GM12878 (cell line): ENCODE measurements at regions of chr22 and their contacts with region 1.

Region 1: GRCh38 chr22:30289134-30289979 is at the start of gene CASTOR1:
- DNase-seq: no peak
- ATAC-seq: peak; percentile 83
- H3K4me3 ChIP-seq: peak within 1 kb of the TSS; percentile 74
- H3K27ac ChIP-seq: peak within 1 kb of the TSS; percentile 55
- H3K4me1 ChIP-seq: peaks cover 25% of the 10 kb centered on the region
- H3K27me3 ChIP-seq: no peaks in the 10 kb centered on the region
- CTCF ChIP-seq: no peak
- EP300 ChIP-seq: no peak
- POLR2A ChIP-seq: no peak; the same call in none of the 2 replicates
- RAD21 ChIP-seq: no peak
- polyA plus RNA-seq, gene CASTOR1: 0.31 to 1.2 TPM

Region 2: DNA sequence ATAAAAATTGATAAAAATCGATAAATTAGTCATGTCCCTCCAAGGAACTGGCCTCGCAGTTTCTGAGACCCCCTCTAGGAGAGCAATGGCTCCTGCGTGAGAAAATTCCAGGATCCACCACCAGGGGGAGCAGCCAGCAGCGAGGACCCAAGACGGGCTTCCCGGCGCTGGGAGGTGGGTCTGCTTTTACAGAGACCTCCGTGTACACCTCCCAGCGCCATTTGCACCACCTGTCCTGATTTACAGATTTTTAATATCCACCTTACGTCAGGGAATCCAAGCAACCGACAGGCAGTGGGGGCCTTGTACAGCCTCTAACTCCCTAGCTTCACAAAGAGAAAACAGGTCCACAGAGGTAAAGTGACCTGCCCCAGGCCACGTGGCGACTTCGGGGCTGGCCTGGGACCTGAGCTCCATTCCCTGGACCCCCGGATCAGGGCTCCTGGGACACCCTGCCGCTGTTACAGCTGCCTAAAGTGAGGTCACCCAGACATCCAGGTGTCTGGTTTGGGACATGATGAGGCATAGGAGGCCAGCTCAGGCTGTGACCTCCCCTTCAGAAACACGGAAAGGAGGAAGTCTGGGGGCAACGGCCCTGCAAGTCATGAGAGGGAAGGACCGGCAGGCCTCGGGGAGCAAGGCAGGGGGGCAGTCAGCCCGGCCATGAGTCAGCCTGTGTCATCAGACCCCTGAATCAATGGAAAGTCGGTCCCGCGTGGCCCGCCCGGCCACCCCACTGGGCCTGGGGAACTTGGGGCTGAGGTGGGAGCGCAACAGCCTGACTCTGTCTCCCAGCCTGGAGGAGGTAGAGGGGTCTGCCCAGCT is 26.2 kb before region 1 on chr22:
- CTCF ChIA-PET with region 1: interaction called, 69 read pairs
- POLR2A ChIA-PET with region 1: interaction called, 3 read pairs
- RAD21 ChIA-PET with region 1: interaction called, 31 read pairs
- SMC1A ChIA-PET with region 1: interaction called, 15 read pairs
- in situ Hi-C with region 1: no loop called
- intact Hi-C with region 1: loop called (anchors 1 kb)
- DNase-seq: no peak
- ATAC-seq: peak; percentile 38
- H3K4me3 ChIP-seq: 0 out of 2 replicates have a peak overlapping the region, but pooled peaks have one; percentile 12
- H3K27ac ChIP-seq: no peak overlapping the region
- H3K4me1 ChIP-seq: peaks cover 20% of the 10 kb centered on the region
- H3K27me3 ChIP-seq: no peaks in the 10 kb centered on the region
- CTCF ChIP-seq: peak; percentile 84 to 97 (median 92)
- EP300 ChIP-seq: no peak
- POLR2A ChIP-seq: no peak
- RAD21 ChIP-seq: peak; percentile 54

Region 3: DNA sequence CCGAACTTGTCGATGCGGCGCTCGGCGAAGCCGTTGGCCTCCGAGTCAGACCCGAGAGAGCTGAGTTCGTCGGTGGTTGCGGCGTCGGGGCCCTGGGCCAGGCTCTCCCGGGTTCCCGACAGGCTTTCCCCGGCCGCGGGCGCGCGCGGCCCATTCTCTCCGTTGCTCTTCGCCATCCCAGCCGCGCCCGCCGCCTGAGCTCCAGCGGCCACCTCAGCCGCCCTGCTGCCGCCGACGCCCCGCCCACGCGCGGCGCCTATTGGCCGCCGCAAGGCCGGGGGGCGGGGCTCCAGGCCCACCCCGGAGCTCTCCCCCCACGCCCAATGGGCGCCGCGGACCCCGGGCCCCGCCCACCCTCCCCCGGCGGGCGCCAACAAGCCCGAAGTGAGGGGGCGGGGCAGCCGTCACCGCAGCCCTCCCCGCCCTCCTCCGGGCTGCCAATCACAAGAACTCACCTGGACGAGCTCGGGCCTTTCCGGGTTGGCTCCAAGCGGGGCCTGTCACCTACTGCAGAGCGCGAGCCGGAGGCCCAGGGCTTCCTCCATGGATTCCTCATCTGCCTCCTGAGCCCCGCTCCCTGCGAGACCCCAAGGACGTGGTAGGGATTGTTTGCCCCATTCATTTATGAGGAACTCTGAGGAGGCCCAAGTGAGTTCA is 37.5 kb after region 1 on chr22 and contains the start of gene TBC1D10A:
- CTCF ChIA-PET with region 1: interaction called, 125 read pairs
- POLR2A ChIA-PET with region 1: interaction called, 28 read pairs
- RAD21 ChIA-PET with region 1: interaction called, 118 read pairs
- SMC1A ChIA-PET with region 1: interaction called, 100 read pairs
- in situ Hi-C with region 1: no loop called
- intact Hi-C with region 1: loop called (anchors 2 kb)
- DNase-seq: peak; percentile 63
- ATAC-seq: peak; percentile 91
- H3K4me3 ChIP-seq: peak within 1 kb of the TSS; percentile 93
- H3K27ac ChIP-seq: peak within 1 kb of the TSS; percentile 81
- H3K4me1 ChIP-seq: peaks cover 16% of the 10 kb centered on the region
- H3K27me3 ChIP-seq: no peaks in the 10 kb centered on the region
- CTCF ChIP-seq: no peak
- EP300 ChIP-seq: no peak
- POLR2A ChIP-seq: peak; percentile 90
- RAD21 ChIP-seq: no peak
- polyA plus RNA-seq, gene TBC1D10A: 0.27 to 0.82 TPM

Region 4: GRCh38 chr22:30362651-30363281 is 73.4 kb after region 1 on chr22:
- CTCF ChIA-PET with region 1: interaction called, 24 read pairs
- POLR2A ChIA-PET with region 1: no interaction called
- RAD21 ChIA-PET with region 1: interaction called, 14 read pairs
- SMC1A ChIA-PET with region 1: interaction called, 8 read pairs
- in situ Hi-C with region 1: no loop called
- intact Hi-C with region 1: loop called (anchors 2 kb)
- DNase-seq: no peak
- ATAC-seq: peak; percentile 32
- H3K4me3 ChIP-seq: no peak overlapping the region
- H3K27ac ChIP-seq: no peak overlapping the region
- H3K4me1 ChIP-seq: no peaks in the 10 kb centered on the region
- H3K27me3 ChIP-seq: no peaks in the 10 kb centered on the region
- CTCF ChIP-seq: no peak
- EP300 ChIP-seq: no peak
- POLR2A ChIP-seq: no peak
- RAD21 ChIP-seq: no peak

Region 5: DNA sequence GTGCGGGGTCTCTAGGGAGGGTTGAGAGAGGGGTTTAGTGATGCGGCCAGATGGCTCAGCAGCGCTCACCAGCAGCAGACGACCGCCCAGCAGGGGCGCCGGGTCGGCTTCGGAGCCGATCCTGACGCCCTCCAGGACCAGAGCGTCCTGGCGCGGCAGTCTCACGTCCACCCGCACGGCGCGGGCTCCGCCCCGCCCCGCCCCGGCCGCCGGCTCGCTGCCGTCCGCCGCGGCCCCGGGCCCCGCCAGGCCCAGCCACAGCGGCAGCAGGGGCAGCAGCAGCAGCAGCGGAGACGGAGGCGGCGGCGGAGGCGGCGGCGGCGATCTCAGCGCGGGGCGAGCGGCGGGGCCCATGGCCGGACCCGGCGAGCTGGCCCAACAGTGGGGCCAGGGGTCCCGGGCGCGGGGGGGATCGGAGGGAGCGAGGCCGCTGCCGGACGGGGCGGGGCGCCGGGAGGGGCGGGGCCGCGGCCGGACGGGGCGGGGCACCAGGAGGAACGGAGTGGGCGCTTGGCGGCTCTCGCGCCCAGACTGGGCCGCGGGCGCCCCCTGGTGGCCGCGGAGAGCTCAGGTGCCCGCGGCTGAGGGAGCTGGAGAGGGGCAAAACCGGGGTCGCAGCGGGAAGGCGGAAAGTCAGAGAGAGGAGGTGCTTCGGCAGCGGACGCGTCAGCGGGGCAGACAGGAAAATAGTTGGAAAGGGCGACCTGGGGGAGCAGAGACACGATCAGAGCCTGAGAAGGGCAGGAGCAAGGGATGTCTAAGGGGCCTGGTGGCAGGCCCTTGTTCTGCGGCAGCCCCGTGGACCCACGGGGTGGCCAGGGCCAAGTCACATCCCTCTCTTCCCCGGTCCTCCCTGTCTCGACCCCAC is 97.8 kb after region 1 on chr22 and contains the start of gene RNF215:
- CTCF ChIA-PET with region 1: interaction called, 436 read pairs
- POLR2A ChIA-PET with region 1: interaction called, 24 read pairs
- RAD21 ChIA-PET with region 1: interaction called, 277 read pairs
- SMC1A ChIA-PET with region 1: interaction called, 201 read pairs
- in situ Hi-C with region 1: loop called (anchors 5 kb)
- intact Hi-C with region 1: loop called (anchors 1 kb)
- DNase-seq: no peak
- ATAC-seq: peak; percentile 88
- H3K4me3 ChIP-seq: peak within 1 kb of the TSS; percentile 77; the same call in 1 of the 2 replicates
- H3K27ac ChIP-seq: no peak within 1 kb of the TSS; the same call in 1 of the 2 replicates
- H3K4me1 ChIP-seq: peaks cover 15% of the 10 kb centered on the region
- H3K27me3 ChIP-seq: no peaks in the 10 kb centered on the region
- CTCF ChIP-seq: peak; percentile 76 to 86 (median 83)
- EP300 ChIP-seq: no peak
- POLR2A ChIP-seq: no peak; the same call in 1 of the 2 replicates
- RAD21 ChIP-seq: peak; percentile 85
- polyA plus RNA-seq, gene RNF215: 0.31 TPM in 1 of 2 experiments, not detected in the other

Region 6: GRCh38 chr22:30485362-30485988 is 196.1 kb after region 1 on chr22:
- CTCF ChIA-PET with region 1: interaction called, 13 read pairs
- POLR2A ChIA-PET with region 1: interaction called, 5 read pairs
- RAD21 ChIA-PET with region 1: interaction called, 3 read pairs
- SMC1A ChIA-PET with region 1: interaction called, 18 read pairs
- in situ Hi-C with region 1: no loop called
- intact Hi-C with region 1: loop called (anchors 10 kb)
- DNase-seq: peak; percentile 5
- ATAC-seq: peak; percentile 100
- H3K4me3 ChIP-seq: no peak overlapping the region
- H3K27ac ChIP-seq: no peak overlapping the region
- H3K4me1 ChIP-seq: no peaks in the 10 kb centered on the region; the same call in 1 of the 2 replicates
- H3K27me3 ChIP-seq: no peaks in the 10 kb centered on the region; a peak in 2 of 4 replicates
- CTCF ChIP-seq: peak; percentile 90 to 93 (median 92)
- EP300 ChIP-seq: no peak
- POLR2A ChIP-seq: no peak
- RAD21 ChIP-seq: peak; percentile 85